ENCODE measurements at regions of chr15 and their contacts with region 1.

Region 1: GRCh38 chr15:78195735-78196201 is 38.6 kb downstream of the ACSBG1 start:
- DNase-seq: peak; percentile 58
- H3K4me3 Mint-ChIP-seq: no peak overlapping the region
- H3K27ac Mint-ChIP-seq: no peak overlapping the region
- H3K4me1 Mint-ChIP-seq: no peaks in the 10 kb centered on the region
- H3K27me3 Mint-ChIP-seq: no peaks in the 10 kb centered on the region

Region 2: DNA sequence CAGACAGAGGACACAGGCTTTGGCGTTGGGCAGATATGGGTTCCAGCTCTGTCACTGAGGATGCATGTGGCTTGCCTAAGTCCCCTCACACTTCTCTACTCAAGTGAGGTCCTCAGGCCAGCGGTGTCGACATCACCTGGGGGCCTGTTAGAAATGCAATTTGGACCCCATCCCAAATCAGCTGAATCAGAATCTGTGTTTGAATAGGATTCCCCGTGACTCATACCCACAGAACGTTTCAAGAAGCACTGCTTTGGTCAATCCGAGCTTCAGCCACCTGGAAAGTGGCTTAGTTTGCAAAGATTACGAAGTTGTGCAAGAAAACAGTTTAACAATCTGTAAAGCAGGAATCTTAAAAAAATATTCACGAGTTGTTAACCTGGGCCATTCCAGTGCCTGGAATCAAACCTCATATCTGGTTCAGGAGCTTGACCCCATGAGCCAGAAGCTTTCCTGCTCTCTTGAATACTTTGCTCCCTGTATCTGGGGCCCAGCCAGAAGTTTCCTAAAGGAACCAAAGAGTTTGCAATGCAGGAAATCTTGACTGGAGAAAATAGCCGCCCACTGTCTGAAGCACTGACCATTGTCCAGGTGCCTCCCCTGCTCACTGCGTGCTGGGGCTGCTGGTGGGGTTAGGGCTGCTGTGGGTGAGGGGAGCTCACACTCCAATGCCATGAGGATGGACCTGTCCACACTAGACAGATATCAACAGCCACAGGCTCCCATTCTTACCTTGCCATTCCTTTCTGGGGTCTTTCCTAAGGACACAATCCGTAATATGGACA is 354.6 kb before region 1 on chr15:
- CTCF ChIA-PET with region 1: no interaction called
- POLR2A ChIA-PET with region 1: no interaction called
- DNase-seq: no peak
- H3K4me3 Mint-ChIP-seq: no peak overlapping the region
- H3K27ac Mint-ChIP-seq: no peak overlapping the region
- H3K4me1 Mint-ChIP-seq: no peaks in the 10 kb centered on the region
- H3K27me3 Mint-ChIP-seq: peaks cover 14% of the 10 kb centered on the region

Region 3: GRCh38 chr15:78120523-78120922 is 75.2 kb before region 1 on chr15:
- CTCF ChIA-PET with region 1: interaction called, 15 read pairs
- POLR2A ChIA-PET with region 1: no interaction called
- DNase-seq: no peak
- H3K4me3 Mint-ChIP-seq: no peak overlapping the region
- H3K27ac Mint-ChIP-seq: no peak overlapping the region
- H3K4me1 Mint-ChIP-seq: no peaks in the 10 kb centered on the region
- H3K27me3 Mint-ChIP-seq: no peaks in the 10 kb centered on the region

Region 4: GRCh38 chr15:78149068-78149804 is 46.5 kb before region 1 on chr15 and contains the start of gene IDH3A:
- CTCF ChIA-PET with region 1: interaction called, 10 read pairs
- POLR2A ChIA-PET with region 1: interaction called, 3 read pairs
- DNase-seq: peak; percentile 99
- H3K4me3 Mint-ChIP-seq: peak within 1 kb of the TSS; percentile 86
- H3K27ac Mint-ChIP-seq: peak within 1 kb of the TSS; percentile 79
- H3K4me1 Mint-ChIP-seq: peaks cover 41% of the 10 kb centered on the region
- H3K27me3 Mint-ChIP-seq: no peaks in the 10 kb centered on the region
- total RNA-seq, gene IDH3A: 73.5 to 85.0 TPM

Region 5: GRCh38 chr15:78177447-78177873 is 18.3 kb before region 1 on chr15:
- CTCF ChIA-PET with region 1: interaction called, 17 read pairs
- POLR2A ChIA-PET with region 1: no interaction called
- DNase-seq: peak; percentile 49
- H3K4me3 Mint-ChIP-seq: no peak overlapping the region
- H3K27ac Mint-ChIP-seq: no peak overlapping the region
- H3K4me1 Mint-ChIP-seq: peaks cover 23% of the 10 kb centered on the region
- H3K27me3 Mint-ChIP-seq: no peaks in the 10 kb centered on the region

Region 6: DNA sequence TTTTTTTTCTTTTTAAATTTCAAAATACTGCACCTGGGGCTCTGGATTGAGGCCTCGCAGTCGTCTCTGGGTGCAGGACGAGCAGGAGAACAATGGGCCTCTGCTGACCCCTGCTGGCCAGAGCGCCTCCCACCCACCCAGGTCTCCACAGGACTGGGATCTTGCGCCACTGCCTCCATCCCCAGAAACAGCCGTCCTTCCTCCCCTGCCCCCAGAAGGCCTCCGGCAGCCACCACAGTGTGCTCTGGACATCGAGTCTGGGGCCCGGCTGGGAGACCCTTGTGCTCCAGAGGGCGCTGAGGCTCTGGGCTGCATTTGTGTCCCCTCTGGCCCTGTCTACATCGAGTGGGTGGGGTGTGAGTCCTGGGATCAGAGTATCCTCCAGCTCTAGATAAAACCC is 45.2 kb after region 1 on chr15:
- CTCF ChIA-PET with region 1: interaction called, 37 read pairs
- POLR2A ChIA-PET with region 1: no interaction called
- DNase-seq: peak; percentile 85
- H3K4me3 Mint-ChIP-seq: no peak overlapping the region
- H3K27ac Mint-ChIP-seq: no peak overlapping the region
- H3K4me1 Mint-ChIP-seq: peaks cover 2% of the 10 kb centered on the region
- H3K27me3 Mint-ChIP-seq: peaks cover 14% of the 10 kb centered on the region

Region 7: GRCh38 chr15:78259232-78259631 is 63.5 kb after region 1 on chr15:
- CTCF ChIA-PET with region 1: no interaction called
- POLR2A ChIA-PET with region 1: no interaction called
- DNase-seq: no peak
- H3K4me3 Mint-ChIP-seq: no peak overlapping the region
- H3K27ac Mint-ChIP-seq: no peak overlapping the region
- H3K4me1 Mint-ChIP-seq: peaks cover 2% of the 10 kb centered on the region
- H3K27me3 Mint-ChIP-seq: no peaks in the 10 kb centered on the region